ENCODE measurements at regions of chr22 and their contacts with region 1.

Region 1: GRCh38 chr22:50341977-50342650 is 1.0 kb upstream of the PPP6R2 start:
- DNase-seq: peak; percentile 78 to 89 (median 88)
- H3K4me3 ChIP-seq: peak overlapping the region; percentile 12 to 86 (median 78)
- H3K27ac ChIP-seq: peak overlapping the region in 1 of 2 experiments; percentile 89
- H3K4me1 ChIP-seq: peaks cover 0 to 17% (median 16%) of the 10 kb centered on the region in 4 experiments
- H3K27me3 ChIP-seq: no peaks in the 10 kb centered on the region

Region 2: GRCh38 chr22:50250555-50251476 is 91.3 kb before region 1 on chr22 and contains the start of gene HDAC10:
- CTCF ChIA-PET with region 1: interaction called, 21 read pairs
- POLR2A ChIA-PET with region 1: no interaction called
- DNase-seq: peak; percentile 77 to 83 (median 81)
- H3K4me3 ChIP-seq: peak within 1 kb of the TSS; percentile 38 to 90 (median 76)
- H3K27ac ChIP-seq: peak within 1 kb of the TSS in 1 of 2 experiments; percentile 49
- H3K4me1 ChIP-seq: peaks cover 0 to 37% (median 31%) of the 10 kb centered on the region in 4 experiments
- H3K27me3 ChIP-seq: no peaks in the 10 kb centered on the region

Region 3: DNA sequence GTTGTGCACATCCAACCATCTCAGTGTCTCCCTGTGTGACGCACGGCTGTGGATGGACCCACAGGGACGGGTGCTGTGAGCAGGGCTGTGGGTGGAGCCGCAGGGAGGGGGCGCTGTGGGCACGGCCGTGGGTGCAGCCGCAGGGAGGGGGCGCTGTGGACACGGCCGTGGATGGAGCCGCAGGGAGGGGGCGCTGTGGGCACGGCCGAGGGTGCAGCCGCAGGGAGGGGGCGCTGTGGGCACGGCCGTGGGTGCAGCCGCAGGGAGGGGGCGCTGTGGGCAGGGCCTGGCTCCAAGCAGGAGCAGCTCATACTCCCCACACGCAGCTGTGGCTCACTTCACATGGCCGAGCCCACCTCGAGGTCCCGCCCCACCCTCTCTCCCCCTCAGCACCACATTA is 66.0 kb before region 1 on chr22:
- CTCF ChIA-PET with region 1: interaction called, 30 read pairs
- POLR2A ChIA-PET with region 1: interaction called, 3 read pairs
- DNase-seq: peak; percentile 90 to 94 (median 93)
- H3K4me3 ChIP-seq: no peak overlapping the region
- H3K27ac ChIP-seq: no peak overlapping the region
- H3K4me1 ChIP-seq: peaks cover 0 to 16% (median 11%) of the 10 kb centered on the region in 4 experiments
- H3K27me3 ChIP-seq: peaks cover 0 to 7% (median 1%) of the 10 kb centered on the region in 5 experiments

Region 4: GRCh38 chr22:50293441-50294318 is 48.4 kb before region 1 on chr22:
- CTCF ChIA-PET with region 1: interaction called, 17 read pairs
- POLR2A ChIA-PET with region 1: no interaction called
- DNase-seq: peak; percentile 53 to 90 (median 88)
- H3K4me3 ChIP-seq: peak overlapping the region in 6 of 7 experiments; percentile 35 to 70 (median 67)
- H3K27ac ChIP-seq: peak overlapping the region; percentile 15 to 74
- H3K4me1 ChIP-seq: peaks cover 0 to 55% (median 52%) of the 10 kb centered on the region in 4 experiments
- H3K27me3 ChIP-seq: no peaks in the 10 kb centered on the region

Region 5: DNA sequence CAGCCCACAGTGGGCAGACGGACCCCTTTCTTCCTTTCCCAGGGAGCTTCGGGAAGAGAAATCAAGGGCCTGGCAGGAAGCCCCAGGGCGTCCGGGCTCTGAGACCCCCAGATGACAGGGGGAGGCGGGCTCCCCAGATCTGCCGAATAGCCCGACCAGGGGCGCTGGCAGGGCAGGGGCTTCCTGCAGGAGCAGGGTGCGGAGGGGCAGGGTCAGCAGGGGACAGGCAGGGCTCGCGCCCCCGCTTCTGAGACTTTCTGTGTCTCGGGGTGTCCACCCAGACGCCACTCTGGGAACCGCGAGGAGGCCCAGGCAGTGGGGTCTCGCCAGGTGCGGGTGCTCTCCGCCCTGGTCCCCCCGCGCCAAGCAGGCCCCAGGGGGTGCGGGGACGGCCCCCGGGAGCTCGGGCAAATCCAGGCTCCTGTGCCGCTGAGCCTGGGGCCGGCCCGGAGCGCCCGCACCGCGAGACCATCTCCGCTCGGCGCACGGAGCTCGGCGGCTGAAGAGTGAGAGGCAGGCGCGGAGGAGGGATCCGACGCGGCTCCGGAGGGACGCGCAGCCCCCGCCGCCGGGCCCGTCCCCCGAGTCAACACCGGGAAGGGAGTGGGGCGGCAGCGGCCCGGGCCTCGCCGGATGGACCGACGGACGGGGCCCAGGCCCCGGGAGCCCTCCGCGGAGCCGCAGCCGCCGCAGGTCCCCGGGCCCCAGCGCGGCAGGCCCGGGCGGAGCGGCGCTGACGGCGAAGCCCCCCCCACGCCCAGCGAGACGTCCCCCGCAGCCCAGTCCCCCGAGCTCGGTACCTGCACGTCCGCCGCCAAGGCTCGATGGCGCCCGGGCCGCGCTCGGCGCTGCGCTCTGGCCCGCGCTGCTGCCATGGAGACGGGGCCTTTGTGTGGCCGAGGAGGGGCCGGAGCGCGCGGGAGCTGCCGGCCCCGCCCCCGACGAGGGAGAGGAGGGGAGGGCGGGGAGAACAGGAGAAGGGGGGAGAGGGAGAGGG is 35.1 kb before region 1 on chr22 and contains the start of gene PLXNB2:
- CTCF ChIA-PET with region 1: interaction called, 32 read pairs
- POLR2A ChIA-PET with region 1: no interaction called
- DNase-seq: peak; percentile 52 to 76 (median 71)
- H3K4me3 ChIP-seq: peak within 1 kb of the TSS; percentile 59 to 86 (median 80)
- H3K27ac ChIP-seq: peak within 1 kb of the TSS; percentile 40 to 71
- H3K4me1 ChIP-seq: peaks cover 0 to 75% (median 66%) of the 10 kb centered on the region in 4 experiments
- H3K27me3 ChIP-seq: no peaks in the 10 kb centered on the region

Region 6: GRCh38 chr22:50326959-50327710 is 15.0 kb before region 1 on chr22 and contains the start of gene DENND6B:
- CTCF ChIA-PET with region 1: interaction called, 46 read pairs
- POLR2A ChIA-PET with region 1: interaction called, 5 read pairs
- DNase-seq: peak; percentile 67 to 76 (median 72)
- H3K4me3 ChIP-seq: peak within 1 kb of the TSS; percentile 58 to 83 (median 71)
- H3K27ac ChIP-seq: peak within 1 kb of the TSS in 1 of 2 experiments; percentile 82
- H3K4me1 ChIP-seq: peaks cover 0 to 17% (median 15%) of the 10 kb centered on the region in 4 experiments
- H3K27me3 ChIP-seq: peaks cover 0 to 6% (median 0%) of the 10 kb centered on the region in 5 experiments

Region 7: GRCh38 chr22:50361688-50362087 is 19.6 kb after region 1 on chr22:
- CTCF ChIA-PET with region 1: interaction called, 10 read pairs
- POLR2A ChIA-PET with region 1: no interaction called
- DNase-seq: no peak
- H3K4me3 ChIP-seq: no peak overlapping the region
- H3K27ac ChIP-seq: no peak overlapping the region
- H3K4me1 ChIP-seq: peaks cover 0 to 14% (median 4%) of the 10 kb centered on the region in 4 experiments
- H3K27me3 ChIP-seq: no peaks in the 10 kb centered on the region